ENCODE measurements at regions of chr7 and their contacts with region 1.

Region 1: GRCh38 chr7:79084423-79084822 is 369.0 kb downstream of the MAGI2 start:
- DNase-seq: no peak
- ATAC-seq: no peak
- H3K4me3 ChIP-seq: no peak overlapping the region
- H3K27ac ChIP-seq: no peak overlapping the region
- H3K4me1 ChIP-seq: no peaks in the 10 kb centered on the region
- H3K27me3 ChIP-seq: no peaks in the 10 kb centered on the region
- CTCF ChIP-seq: no peak
- EP300 ChIP-seq: no peak
- POLR2A ChIP-seq: no peak
- RAD21 ChIP-seq: no peak

Region 2: GRCh38 chr7:79064187-79064823 is 20.1 kb before region 1 on chr7:
- CTCF ChIA-PET with region 1: no interaction called
- POLR2A ChIA-PET with region 1: no interaction called
- in situ Hi-C with region 1: no loop called
- intact Hi-C with region 1: no loop called
- DNase-seq: peak; percentile 10
- ATAC-seq: 0 out of 3 replicates have a peak, but pooled peaks have one; percentile 35
- H3K4me3 ChIP-seq: no peak overlapping the region
- H3K27ac ChIP-seq: no peak overlapping the region
- H3K4me1 ChIP-seq: peaks cover 8% of the 10 kb centered on the region; the same call in 1 of the 2 replicates
- H3K27me3 ChIP-seq: no peaks in the 10 kb centered on the region
- CTCF ChIP-seq: no peak
- EP300 ChIP-seq: no peak
- POLR2A ChIP-seq: no peak
- RAD21 ChIP-seq: no peak

Region 3: DNA sequence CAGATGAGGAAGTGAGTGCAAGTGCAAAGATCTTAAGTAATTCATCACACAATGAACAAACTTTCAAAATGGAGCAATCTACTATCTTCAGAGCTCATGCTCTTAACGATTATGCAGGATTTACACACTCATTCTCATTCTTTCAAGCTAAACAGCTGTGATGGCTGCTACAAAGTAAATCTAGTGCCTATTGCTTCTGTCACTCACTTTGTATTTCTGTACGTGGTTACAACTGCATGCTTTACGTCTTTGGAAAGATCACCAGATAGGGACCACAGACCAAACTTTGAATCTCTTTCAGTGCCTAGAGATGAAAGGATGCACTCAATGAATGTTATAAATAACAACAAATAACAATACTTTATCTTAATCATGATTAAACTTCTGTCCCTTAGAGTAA is 174.4 kb after region 1 on chr7:
- CTCF ChIA-PET with region 1: no interaction called
- POLR2A ChIA-PET with region 1: no interaction called
- in situ Hi-C with region 1: no loop called
- intact Hi-C with region 1: loop called (anchors 5 kb)
- DNase-seq: no peak
- ATAC-seq: no peak
- H3K4me3 ChIP-seq: no peak overlapping the region
- H3K27ac ChIP-seq: no peak overlapping the region
- H3K4me1 ChIP-seq: no peaks in the 10 kb centered on the region
- H3K27me3 ChIP-seq: no peaks in the 10 kb centered on the region
- CTCF ChIP-seq: no peak
- EP300 ChIP-seq: no peak
- POLR2A ChIP-seq: no peak
- RAD21 ChIP-seq: no peak